ENCODE measurements at regions of chr2 and their contacts with region 1.

Region 1: GRCh38 chr2:73828818-73829570 is at the start of gene STAMBP:
- DNase-seq: peak; percentile 98
- H3K4me3 Mint-ChIP-seq: peak within 1 kb of the TSS; percentile 82
- H3K27ac Mint-ChIP-seq: peak within 1 kb of the TSS; percentile 98
- H3K4me1 Mint-ChIP-seq: peaks cover 33% of the 10 kb centered on the region
- H3K27me3 Mint-ChIP-seq: no peaks in the 10 kb centered on the region
- CTCF ChIP-seq: no peak
- total RNA-seq, gene STAMBP: 64.9 and 66.3 TPM in 2 replicates

Region 2: GRCh38 chr2:73759285-73759764 is 69.7 kb before region 1 on chr2:
- CTCF ChIA-PET with region 1: interaction called, 4 read pairs
- POLR2A ChIA-PET with region 1: interaction called, 3 read pairs
- intact Hi-C with region 1: loop called (anchors 2 kb)
- DNase-seq: no peak
- H3K4me3 Mint-ChIP-seq: no peak overlapping the region
- H3K27ac Mint-ChIP-seq: no peak overlapping the region
- H3K4me1 Mint-ChIP-seq: peaks cover 3% of the 10 kb centered on the region
- H3K27me3 Mint-ChIP-seq: no peaks in the 10 kb centered on the region
- CTCF ChIP-seq: no peak

Region 3: DNA sequence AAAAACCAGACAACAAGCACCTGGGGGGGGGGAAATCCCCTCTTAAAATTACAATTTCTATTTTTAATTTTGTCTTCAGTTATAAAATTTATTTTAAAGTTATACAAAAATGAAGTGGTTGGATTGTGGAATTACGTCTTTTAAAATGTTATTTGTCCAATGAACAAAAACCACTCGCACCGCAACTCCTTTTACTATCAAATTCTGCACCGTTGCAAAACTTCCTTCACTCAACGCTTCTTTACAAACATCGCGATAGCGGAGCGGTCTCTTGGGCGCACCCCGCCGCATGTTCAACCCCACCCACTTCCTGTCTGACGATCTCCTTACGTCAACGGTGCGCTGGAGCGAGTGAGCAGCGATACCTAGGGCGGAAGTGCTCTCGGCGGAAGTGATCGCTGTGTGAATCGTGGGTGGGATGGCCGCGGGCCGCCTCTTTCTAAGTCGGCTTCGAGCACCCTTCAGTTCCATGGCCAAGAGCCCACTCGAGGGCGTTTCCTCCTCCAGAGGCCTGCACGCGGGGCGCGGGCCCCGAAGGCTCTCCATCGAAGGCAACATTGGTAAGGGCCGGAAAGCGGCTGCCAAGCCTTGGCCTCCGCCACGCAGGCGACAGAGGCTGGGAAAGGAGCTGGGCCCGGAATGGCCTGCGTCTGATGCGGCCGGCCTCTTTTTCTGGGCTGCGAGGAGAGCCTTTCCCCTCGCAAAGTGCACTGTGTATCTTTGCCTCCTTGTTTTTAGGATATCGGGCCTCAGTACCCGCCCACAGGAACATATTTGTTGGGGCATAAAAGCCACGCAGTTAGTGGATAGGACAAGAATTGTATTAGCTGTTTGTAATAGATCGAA is 97.7 kb after region 1 on chr2 and contains the start of gene DGUOK:
- CTCF ChIA-PET with region 1: interaction called, 4 read pairs
- POLR2A ChIA-PET with region 1: interaction called, 21 read pairs
- intact Hi-C with region 1: loop called (anchors 2 kb)
- DNase-seq: peak; percentile 99
- H3K4me3 Mint-ChIP-seq: peak within 1 kb of the TSS; percentile 85
- H3K27ac Mint-ChIP-seq: peak within 1 kb of the TSS; percentile 97
- H3K4me1 Mint-ChIP-seq: peaks cover 47% of the 10 kb centered on the region
- H3K27me3 Mint-ChIP-seq: no peaks in the 10 kb centered on the region
- CTCF ChIP-seq: no peak
- total RNA-seq, gene DGUOK: 74.4 and 92.3 TPM in 2 replicates

Region 4: DNA sequence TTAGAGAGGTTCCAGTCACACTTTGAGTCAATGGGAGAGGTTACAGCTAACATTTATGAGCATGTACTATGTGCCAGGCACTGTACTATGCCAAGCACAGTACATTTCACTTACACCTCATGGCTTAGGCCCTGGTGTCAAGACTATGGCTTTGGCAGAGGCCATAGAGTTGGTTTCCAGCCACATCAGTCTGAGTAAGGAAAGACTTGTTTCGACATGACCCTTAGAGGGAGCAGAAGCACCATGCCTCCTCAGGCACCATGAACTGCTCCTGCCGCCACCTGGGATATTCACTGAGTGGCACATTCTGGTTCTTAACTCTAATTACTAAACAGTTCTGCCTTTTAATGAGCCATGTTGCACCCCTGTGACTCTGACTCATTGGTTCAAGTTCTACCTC is 110.4 kb after region 1 on chr2:
- CTCF ChIA-PET with region 1: interaction called, 10 read pairs
- POLR2A ChIA-PET with region 1: interaction called, 12 read pairs
- intact Hi-C with region 1: loop called (anchors 2 kb)
- DNase-seq: peak; percentile 91
- H3K4me3 Mint-ChIP-seq: peak overlapping the region; percentile 30
- H3K27ac Mint-ChIP-seq: peak overlapping the region; percentile 91
- H3K4me1 Mint-ChIP-seq: peaks cover 38% of the 10 kb centered on the region
- H3K27me3 Mint-ChIP-seq: no peaks in the 10 kb centered on the region
- CTCF ChIP-seq: peak; percentile 54

Region 5: GRCh38 chr2:73985308-73986084 is 156.5 kb after region 1 on chr2:
- CTCF ChIA-PET with region 1: interaction called, 7 read pairs
- POLR2A ChIA-PET with region 1: interaction called, 10 read pairs
- intact Hi-C with region 1: loop called (anchors 2 kb)
- DNase-seq: peak; percentile 42
- H3K4me3 Mint-ChIP-seq: peak overlapping the region; percentile 74
- H3K27ac Mint-ChIP-seq: no peak overlapping the region
- H3K4me1 Mint-ChIP-seq: peaks cover 57% of the 10 kb centered on the region
- H3K27me3 Mint-ChIP-seq: no peaks in the 10 kb centered on the region
- CTCF ChIP-seq: no peak

Region 6: GRCh38 chr2:74147727-74148456 is 318.9 kb after region 1 on chr2 and contains the start of gene BOLA3:
- CTCF ChIA-PET with region 1: interaction called, 137 read pairs
- POLR2A ChIA-PET with region 1: interaction called, 10 read pairs
- intact Hi-C with region 1: loop called (anchors 1 kb)
- DNase-seq: peak; percentile 80
- H3K4me3 Mint-ChIP-seq: no peak within 1 kb of the TSS
- H3K27ac Mint-ChIP-seq: no peak within 1 kb of the TSS
- H3K4me1 Mint-ChIP-seq: no peaks in the 10 kb centered on the region
- H3K27me3 Mint-ChIP-seq: no peaks in the 10 kb centered on the region
- CTCF ChIP-seq: peak; percentile 70
- total RNA-seq, gene BOLA3: 72.5 and 83.8 TPM in 2 replicates

Region 7: GRCh38 chr2:74198461-74199274 is 369.7 kb after region 1 on chr2 and contains the start of gene MTHFD2:
- CTCF ChIA-PET with region 1: interaction called, 5 read pairs
- POLR2A ChIA-PET with region 1: interaction called, 14 read pairs
- intact Hi-C with region 1: no loop called
- DNase-seq: peak; percentile 99
- H3K4me3 Mint-ChIP-seq: peak within 1 kb of the TSS; percentile 94
- H3K27ac Mint-ChIP-seq: peak within 1 kb of the TSS; percentile 97
- H3K4me1 Mint-ChIP-seq: peaks cover 27% of the 10 kb centered on the region
- H3K27me3 Mint-ChIP-seq: no peaks in the 10 kb centered on the region
- CTCF ChIP-seq: peak; percentile 70
- total RNA-seq, gene MTHFD2: 387 and 470 TPM in 2 replicates

Measured in MCF 10A (cell line).